Panc1 (cell line): ENCODE measurements at regions of chr2 and their contacts with region 1.

Region 1: DNA sequence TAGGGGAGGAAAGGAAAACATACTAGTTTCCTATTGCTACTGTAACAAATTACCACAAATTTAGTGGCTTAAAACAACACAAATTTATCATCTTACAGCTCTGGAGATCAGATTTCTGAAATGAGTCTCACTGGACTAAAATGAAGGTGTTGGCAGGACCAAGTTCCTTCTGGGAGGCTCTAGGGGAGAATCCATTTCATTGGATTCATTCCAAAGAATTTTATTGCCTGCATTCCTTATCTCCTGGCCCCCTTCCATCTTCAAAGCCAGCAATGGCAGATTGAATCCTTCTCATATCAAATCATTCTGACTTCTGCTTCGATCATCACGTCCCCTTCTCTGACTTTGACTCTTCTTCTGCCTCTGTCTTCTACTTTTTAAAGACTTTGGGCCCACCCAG is 250.9 kb downstream of the IRS1 start:
- DNase-seq: no peak
- ATAC-seq: no peak
- H3K4me3 ChIP-seq: no peak overlapping the region
- H3K27ac ChIP-seq: no peak overlapping the region
- H3K4me1 ChIP-seq: no peaks in the 10 kb centered on the region
- H3K27me3 ChIP-seq: no peaks in the 10 kb centered on the region
- CTCF ChIP-seq: no peak

Region 2: GRCh38 chr2:226638576-226638975 is 89.8 kb after region 1 on chr2:
- CTCF ChIA-PET with region 1: no interaction called
- POLR2A ChIA-PET with region 1: no interaction called
- in situ Hi-C with region 1: no loop called
- intact Hi-C with region 1: no loop called
- DNase-seq: no peak
- ATAC-seq: no peak
- H3K4me3 ChIP-seq: no peak overlapping the region
- H3K27ac ChIP-seq: no peak overlapping the region
- H3K4me1 ChIP-seq: no peaks in the 10 kb centered on the region
- H3K27me3 ChIP-seq: no peaks in the 10 kb centered on the region
- CTCF ChIP-seq: no peak

Region 3: GRCh38 chr2:226721541-226721940 is 172.8 kb after region 1 on chr2:
- CTCF ChIA-PET with region 1: no interaction called
- POLR2A ChIA-PET with region 1: interaction called, 10 read pairs
- in situ Hi-C with region 1: no loop called
- intact Hi-C with region 1: no loop called
- DNase-seq: no peak
- ATAC-seq: no peak
- H3K4me3 ChIP-seq: no peak overlapping the region
- H3K27ac ChIP-seq: no peak overlapping the region
- H3K4me1 ChIP-seq: no peaks in the 10 kb centered on the region
- H3K27me3 ChIP-seq: no peaks in the 10 kb centered on the region
- CTCF ChIP-seq: no peak